ENCODE measurements at regions of chr1 and their contacts with region 1.

Region 1: DNA sequence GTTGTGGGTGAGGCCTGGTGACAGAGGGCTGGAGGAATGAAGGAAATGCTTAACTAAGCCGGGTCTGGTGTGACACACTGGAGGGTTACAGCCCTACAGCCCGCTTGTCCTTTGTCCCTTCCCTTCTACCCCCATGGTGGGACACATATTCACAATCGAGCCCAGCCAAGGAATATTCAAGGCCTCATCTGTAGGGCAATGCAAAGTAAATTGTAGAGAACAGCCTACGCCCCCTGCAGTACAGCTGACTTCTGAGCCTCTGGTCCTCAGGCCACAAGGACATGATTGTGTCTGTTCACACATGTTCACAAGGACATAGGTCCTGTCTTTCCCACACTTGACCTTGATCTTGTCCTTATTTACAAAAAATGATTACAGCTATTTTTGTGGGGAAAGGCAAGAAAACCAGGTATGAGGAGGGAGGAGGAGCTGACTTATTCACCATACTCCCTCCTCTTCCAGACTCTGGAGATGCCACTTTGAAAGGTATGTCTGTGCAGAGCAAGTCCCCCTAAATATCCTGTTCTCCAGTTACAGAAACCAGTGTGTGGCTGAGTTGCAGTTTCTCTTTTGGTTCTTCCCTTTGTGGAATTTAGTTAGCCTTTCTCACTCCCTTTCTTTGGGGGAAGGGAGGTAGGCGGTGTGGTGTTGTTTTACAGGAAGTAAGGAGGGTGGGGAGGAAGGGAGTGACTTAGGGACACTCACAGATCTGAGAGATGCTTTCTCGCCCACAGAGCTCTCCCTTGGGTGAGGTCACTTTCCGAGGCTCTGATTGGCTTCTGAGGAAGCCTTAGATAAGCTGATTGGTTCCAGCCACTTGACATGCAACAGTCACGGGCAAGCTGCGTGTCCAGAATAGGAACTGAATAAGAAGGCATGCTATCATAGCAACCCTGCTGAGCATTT is 14.6 kb downstream of the POLR3GL start:
- DNase-seq: peak; percentile 93
- ATAC-seq: peak; percentile 89
- H3K4me3 Mint-ChIP-seq: no peak overlapping the region
- H3K27ac Mint-ChIP-seq: no peak overlapping the region
- H3K4me1 Mint-ChIP-seq: peaks cover 16% of the 10 kb centered on the region
- H3K27me3 Mint-ChIP-seq: no peaks in the 10 kb centered on the region

Region 2: DNA sequence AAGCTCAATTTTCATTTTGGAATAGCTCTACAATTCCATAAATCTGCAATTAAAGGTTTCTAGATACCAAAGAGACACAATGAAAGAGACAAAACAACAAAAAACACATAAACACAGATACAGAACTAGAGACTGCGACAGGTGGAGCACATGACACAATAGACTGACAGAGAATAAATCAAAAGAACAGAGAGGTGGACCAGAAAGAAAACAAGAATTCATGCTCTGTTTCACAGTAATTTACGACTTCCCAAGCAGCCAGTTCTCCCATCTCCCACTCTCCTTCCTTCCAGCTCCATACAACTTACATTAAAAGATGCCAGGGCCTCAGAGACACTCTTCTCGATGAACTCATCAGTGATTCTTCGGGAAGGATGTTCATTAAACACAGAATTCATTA is 36.7 kb before region 1 on chr1:
- CTCF ChIA-PET with region 1: no interaction called
- POLR2A ChIA-PET with region 1: no interaction called
- DNase-seq: no peak
- ATAC-seq: no peak
- H3K4me3 Mint-ChIP-seq: no peak overlapping the region
- H3K27ac Mint-ChIP-seq: peak overlapping the region; percentile 3
- H3K4me1 Mint-ChIP-seq: no peaks in the 10 kb centered on the region
- H3K27me3 Mint-ChIP-seq: no peaks in the 10 kb centered on the region

Region 3: GRCh38 chr1:145957443-145958319 is 21.4 kb before region 1 on chr1 and contains the start of gene LIX1L:
- CTCF ChIA-PET with region 1: interaction called, 98 read pairs
- POLR2A ChIA-PET with region 1: interaction called, 58 read pairs
- DNase-seq: peak; percentile 98
- ATAC-seq: peak; percentile 93
- H3K4me3 Mint-ChIP-seq: peak within 1 kb of the TSS; percentile 85
- H3K27ac Mint-ChIP-seq: peak within 1 kb of the TSS; percentile 84
- H3K4me1 Mint-ChIP-seq: peaks cover 62% of the 10 kb centered on the region
- H3K27me3 Mint-ChIP-seq: no peaks in the 10 kb centered on the region
- total RNA-seq, gene LIX1L: 45.8 to 48.4 TPM

Region 4: GRCh38 chr1:146001709-146002108 is 22.6 kb after region 1 on chr1:
- CTCF ChIA-PET with region 1: interaction called, 269 read pairs
- POLR2A ChIA-PET with region 1: interaction called, 373 read pairs
- DNase-seq: no peak
- ATAC-seq: no peak
- H3K4me3 Mint-ChIP-seq: no peak overlapping the region
- H3K27ac Mint-ChIP-seq: no peak overlapping the region
- H3K4me1 Mint-ChIP-seq: peaks cover 61% of the 10 kb centered on the region
- H3K27me3 Mint-ChIP-seq: no peaks in the 10 kb centered on the region

Region 5: DNA sequence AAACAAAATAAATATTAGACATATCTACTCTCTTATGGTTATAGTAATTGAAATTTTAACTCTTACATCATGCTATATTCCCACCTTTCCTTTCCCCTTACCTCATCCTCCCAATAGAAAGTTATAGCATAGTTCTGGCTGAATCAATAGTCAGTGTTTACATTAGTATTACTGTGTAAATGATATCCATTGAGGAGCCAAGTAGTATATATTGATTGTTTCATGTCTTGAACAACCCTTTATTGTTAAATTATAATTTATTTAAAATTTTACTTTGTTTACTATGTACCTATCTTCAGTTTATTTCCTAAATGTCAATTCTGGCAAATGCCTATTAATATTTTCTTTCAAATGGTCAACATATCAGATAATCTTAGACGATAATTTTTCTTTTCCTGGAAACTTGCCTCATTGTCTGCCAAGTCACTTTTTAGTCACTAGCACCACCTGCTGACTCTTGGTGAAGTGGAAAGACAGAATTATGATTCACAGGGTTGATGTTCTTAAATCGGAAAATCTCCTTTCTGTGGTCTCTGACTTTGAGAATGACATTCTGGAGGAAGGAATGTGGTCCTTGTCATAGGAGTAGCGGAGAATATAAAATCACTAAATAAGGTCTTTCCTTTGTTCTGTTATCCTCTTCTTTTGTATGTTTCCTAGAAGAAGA is 33.8 kb after region 1 on chr1:
- CTCF ChIA-PET with region 1: interaction called, 269 read pairs
- POLR2A ChIA-PET with region 1: interaction called, 61 read pairs
- DNase-seq: peak; percentile 77
- ATAC-seq: peak; percentile 84
- H3K4me3 Mint-ChIP-seq: no peak overlapping the region
- H3K27ac Mint-ChIP-seq: no peak overlapping the region
- H3K4me1 Mint-ChIP-seq: peaks cover 13% of the 10 kb centered on the region
- H3K27me3 Mint-ChIP-seq: peaks cover 19% of the 10 kb centered on the region

Region 6: GRCh38 chr1:146036965-146037646 is 58.0 kb after region 1 on chr1:
- CTCF ChIA-PET with region 1: interaction called, 47 read pairs
- POLR2A ChIA-PET with region 1: interaction called, 12 read pairs
- DNase-seq: peak; percentile 88
- ATAC-seq: peak; percentile 52
- H3K4me3 Mint-ChIP-seq: peak overlapping the region; percentile 91
- H3K27ac Mint-ChIP-seq: peak overlapping the region; percentile 95
- H3K4me1 Mint-ChIP-seq: peaks cover 48% of the 10 kb centered on the region
- H3K27me3 Mint-ChIP-seq: peaks cover 6% of the 10 kb centered on the region